Head of caudate nucleus (tissue), 42 donors: ENCODE measurements at regions of chr12 and their contacts with region 1.

Region 1: GRCh38 chr12:117212563-117213190 is 22.4 kb upstream of the FBXO21 start:
- DNase-seq: peak; percentile 37 to 92 (median 80)

Region 2: GRCh38 chr12:117836999-117837736 is 624.5 kb after region 1 on chr12:
- intact Hi-C with region 1: loop called (anchors 10 kb)
- DNase-seq: peak in 41 of 42 donors; percentile 70 to 96 (median 90)